PC-3 (cell line): ENCODE measurements at regions of chr3 and their contacts with region 1.

Region 1: GRCh38 chr3:9951962-9952805 is at the start of gene PRRT3:
- DNase-seq: peak; percentile 58
- ATAC-seq: peak; percentile 56
- H3K4me3 ChIP-seq: peak within 1 kb of the TSS; percentile 73
- H3K27ac ChIP-seq: no peak within 1 kb of the TSS
- H3K4me1 ChIP-seq: peaks cover 47% of the 10 kb centered on the region
- H3K27me3 ChIP-seq: no peaks in the 10 kb centered on the region
- CTCF ChIP-seq: no peak
- total RNA-seq, gene PRRT3: 4.4 and 5.0 TPM in 2 replicates

Region 2: DNA sequence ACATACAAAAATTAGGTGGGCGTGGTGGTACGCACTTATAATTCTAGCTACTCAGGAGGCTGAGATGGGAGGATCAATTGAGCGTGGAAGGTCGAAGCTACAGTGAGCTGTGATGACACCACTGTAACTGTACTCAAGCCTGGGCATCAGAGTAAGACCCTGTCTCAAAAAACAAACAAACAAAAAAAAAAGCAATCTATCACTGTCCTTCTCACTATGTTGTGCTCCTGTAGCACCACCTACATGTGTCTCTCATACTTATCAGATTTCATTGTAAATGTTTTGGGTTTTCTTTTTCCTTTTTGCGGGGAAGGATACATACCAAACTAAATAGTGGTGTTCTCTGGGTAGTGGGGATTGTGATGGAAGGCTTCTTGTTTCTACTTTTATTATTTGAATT is 88.8 kb after region 1 on chr3:
- CTCF ChIA-PET with region 1: no interaction called
- POLR2A ChIA-PET with region 1: no interaction called
- intact Hi-C with region 1: no loop called
- DNase-seq: no peak
- ATAC-seq: 0 out of 2 replicates have a peak, but pooled peaks have one; percentile 15
- H3K4me3 ChIP-seq: no peak overlapping the region
- H3K27ac ChIP-seq: no peak overlapping the region
- H3K4me1 ChIP-seq: no peaks in the 10 kb centered on the region
- H3K27me3 ChIP-seq: no peaks in the 10 kb centered on the region
- CTCF ChIP-seq: no peak

Region 3: DNA sequence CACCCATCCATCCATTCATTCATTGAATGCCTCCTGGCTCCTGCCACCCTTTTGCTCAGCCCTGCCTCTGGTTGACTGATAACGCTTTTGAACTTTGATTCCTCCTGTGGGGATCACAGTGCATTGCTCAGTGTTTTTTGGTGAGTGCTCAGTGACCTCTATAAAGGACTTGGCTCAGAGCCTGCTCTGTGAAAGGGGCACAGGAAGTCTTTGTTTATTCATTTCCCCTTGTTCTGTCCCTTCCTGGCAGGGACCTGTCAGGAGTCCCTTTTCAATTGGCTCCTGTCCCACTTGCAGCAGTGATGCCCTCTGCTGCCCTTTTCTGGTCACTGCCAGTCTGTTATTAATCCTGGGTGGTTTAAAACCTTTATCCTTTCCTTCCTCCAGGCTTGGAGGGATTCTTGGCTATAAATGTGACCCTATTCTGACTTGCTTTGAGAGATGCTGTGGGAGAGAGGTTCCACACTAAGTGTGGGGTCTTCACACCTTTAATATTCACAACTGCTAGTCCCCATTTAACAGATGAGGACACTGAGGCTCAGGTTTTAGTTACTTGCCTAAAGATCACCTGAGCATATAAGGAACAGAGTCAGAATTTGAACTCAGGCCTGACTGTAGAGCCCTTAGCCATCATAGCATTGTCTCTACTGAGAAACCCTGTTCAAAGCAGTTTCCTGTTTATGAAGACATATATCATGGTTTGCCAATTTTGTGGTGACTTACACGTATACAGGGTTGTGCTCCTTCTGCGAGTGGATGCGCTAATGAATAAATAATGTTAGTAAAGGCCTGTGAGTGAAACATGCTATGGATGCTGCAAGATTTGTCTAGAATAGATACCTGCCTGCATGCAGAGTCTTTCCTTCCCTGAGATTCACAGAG is 272.8 kb after region 1 on chr3:
- CTCF ChIA-PET with region 1: no interaction called
- POLR2A ChIA-PET with region 1: no interaction called
- intact Hi-C with region 1: loop called (anchors 10 kb)
- DNase-seq: peak; percentile 92
- ATAC-seq: peak; percentile 50
- H3K4me3 ChIP-seq: no peak overlapping the region
- H3K27ac ChIP-seq: no peak overlapping the region
- H3K4me1 ChIP-seq: peaks cover 36% of the 10 kb centered on the region
- H3K27me3 ChIP-seq: no peaks in the 10 kb centered on the region
- CTCF ChIP-seq: peak; percentile 96